Activated T-helper 1 cell treated with anti-CD3 and anti-CD28 coated beads, Interleukin-12 subunit alpha, Interleukin-12 subunit beta, Interleukin-2, Interleukin-4 antibody, amounts not matched to agents 30 ng/mL and 10 ng/mL and 1 ng/mL, durations not matched to agents 14 hours and 24 hours and 36 hours (primary cell): ENCODE measurements at regions of chr19 and their contacts with region 1.

Region 1: GRCh38 chr19:44500148-44500956 is at the start of gene ZNF180:
- DNase-seq: peak; percentile 92
- H3K4me3 Mint-ChIP-seq: peak within 1 kb of the TSS; percentile 93
- H3K27ac Mint-ChIP-seq: peak within 1 kb of the TSS; percentile 86
- H3K4me1 Mint-ChIP-seq: peaks cover 28% of the 10 kb centered on the region
- H3K27me3 Mint-ChIP-seq: no peaks in the 10 kb centered on the region
- total RNA-seq, gene ZNF180: 8.8 and 10.1 TPM in 2 replicates

Region 2: DNA sequence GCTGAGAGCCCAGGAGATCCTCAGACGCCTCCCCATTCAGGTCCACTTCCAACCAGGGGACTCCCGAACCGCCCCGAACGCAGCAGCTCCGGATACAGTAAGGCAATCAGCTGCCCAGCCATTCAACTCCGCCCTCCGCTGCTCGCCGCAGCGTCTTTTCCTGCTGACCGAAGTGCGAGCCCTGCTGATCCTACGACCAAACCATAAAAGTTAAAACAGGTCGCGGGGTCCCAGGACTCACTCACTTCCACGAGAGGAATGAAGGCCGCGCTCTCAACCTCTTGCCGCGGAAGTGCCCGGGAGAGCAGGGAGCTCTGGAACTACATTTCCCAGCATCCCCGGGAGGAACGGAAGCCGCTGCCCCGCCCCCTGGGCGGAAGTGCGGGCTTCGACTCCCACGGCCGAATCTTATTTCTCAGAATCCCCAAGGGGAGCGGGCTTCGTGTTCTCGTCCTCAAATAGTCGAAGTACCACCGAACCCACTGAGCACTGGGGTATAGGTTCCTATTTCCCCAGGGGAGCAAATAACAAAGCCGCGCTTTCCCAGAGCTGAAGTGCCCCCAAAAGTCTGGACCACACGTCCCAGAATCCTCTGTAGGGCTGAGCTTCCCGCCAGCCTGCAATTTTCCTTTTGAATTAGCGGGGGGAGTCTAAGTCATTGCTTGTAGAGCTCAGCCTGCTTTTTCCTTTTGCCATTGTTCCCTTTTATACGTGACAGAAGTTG is 565.2 kb before region 1 on chr19 and contains the start of gene ZNF45:
- intact Hi-C with region 1: loop called (anchors 5 kb)
- DNase-seq: peak; percentile 81
- H3K4me3 Mint-ChIP-seq: peak within 1 kb of the TSS; percentile 95
- H3K27ac Mint-ChIP-seq: peak within 1 kb of the TSS; percentile 83
- H3K4me1 Mint-ChIP-seq: peaks cover 20% of the 10 kb centered on the region
- H3K27me3 Mint-ChIP-seq: no peaks in the 10 kb centered on the region
- total RNA-seq, gene ZNF45: 11.5 and 13.1 TPM in 2 replicates

Region 3: GRCh38 chr19:44025217-44025936 is 475.0 kb before region 1 on chr19 and contains the start of gene ZNF222:
- intact Hi-C with region 1: loop called (anchors 10 kb)
- DNase-seq: peak; percentile 69
- H3K4me3 Mint-ChIP-seq: peak within 1 kb of the TSS; percentile 96
- H3K27ac Mint-ChIP-seq: peak within 1 kb of the TSS; percentile 85
- H3K4me1 Mint-ChIP-seq: peaks cover 18% of the 10 kb centered on the region
- H3K27me3 Mint-ChIP-seq: no peaks in the 10 kb centered on the region
- total RNA-seq, gene ZNF222: 1.2 and 1.5 TPM in 2 replicates

Region 4: GRCh38 chr19:44164673-44165512 is 335.5 kb before region 1 on chr19 and contains the start of gene ZNF226:
- intact Hi-C with region 1: loop called (anchors 1 kb)
- DNase-seq: peak; percentile 71
- H3K4me3 Mint-ChIP-seq: peak within 1 kb of the TSS; percentile 90
- H3K27ac Mint-ChIP-seq: peak within 1 kb of the TSS; percentile 84
- H3K4me1 Mint-ChIP-seq: peaks cover 29% of the 10 kb centered on the region
- H3K27me3 Mint-ChIP-seq: no peaks in the 10 kb centered on the region
- total RNA-seq, gene ZNF226: 10.5 and 11.6 TPM in 2 replicates

Region 5: DNA sequence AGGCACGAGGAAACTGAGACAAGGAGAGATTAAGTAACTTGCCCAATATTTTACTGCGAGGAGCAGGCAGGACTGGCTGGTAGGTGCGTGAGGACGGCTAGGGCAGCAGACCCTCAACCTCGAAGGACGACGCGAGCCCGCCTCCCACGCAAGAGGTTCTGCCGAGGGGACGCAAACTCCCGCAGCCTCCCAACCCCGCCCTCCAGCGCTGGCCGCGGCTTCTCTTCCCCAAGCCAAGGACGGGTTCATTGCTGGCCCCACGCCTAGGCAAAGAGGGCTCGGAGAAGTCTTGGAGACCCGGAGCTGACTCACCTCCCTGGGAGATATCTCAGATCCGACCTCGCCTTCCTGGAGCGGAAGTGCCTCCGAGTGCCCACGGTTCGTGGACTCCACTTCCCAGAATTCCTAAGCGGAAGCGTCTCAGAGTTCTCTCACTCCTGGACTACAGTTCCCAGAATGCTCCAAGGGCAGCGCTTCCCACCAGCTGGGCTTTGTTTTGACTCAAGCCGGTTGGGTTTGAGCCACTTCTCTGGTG is 195.6 kb before region 1 on chr19 and contains the start of gene ZNF235:
- intact Hi-C with region 1: loop called (anchors 1 kb)
- DNase-seq: peak; percentile 60
- H3K4me3 Mint-ChIP-seq: peak within 1 kb of the TSS; percentile 90
- H3K27ac Mint-ChIP-seq: peak within 1 kb of the TSS; percentile 34
- H3K4me1 Mint-ChIP-seq: peaks cover 20% of the 10 kb centered on the region
- H3K27me3 Mint-ChIP-seq: no peaks in the 10 kb centered on the region
- total RNA-seq, gene ZNF235: 3.8 and 4.7 TPM in 2 replicates

Region 6: GRCh38 chr19:44696939-44697669 is 196.8 kb after region 1 on chr19:
- intact Hi-C with region 1: no loop called
- DNase-seq: no peak
- H3K4me3 Mint-ChIP-seq: no peak overlapping the region
- H3K27ac Mint-ChIP-seq: no peak overlapping the region
- H3K4me1 Mint-ChIP-seq: peaks cover 29% of the 10 kb centered on the region
- H3K27me3 Mint-ChIP-seq: peaks cover 10% of the 10 kb centered on the region

Region 7: DNA sequence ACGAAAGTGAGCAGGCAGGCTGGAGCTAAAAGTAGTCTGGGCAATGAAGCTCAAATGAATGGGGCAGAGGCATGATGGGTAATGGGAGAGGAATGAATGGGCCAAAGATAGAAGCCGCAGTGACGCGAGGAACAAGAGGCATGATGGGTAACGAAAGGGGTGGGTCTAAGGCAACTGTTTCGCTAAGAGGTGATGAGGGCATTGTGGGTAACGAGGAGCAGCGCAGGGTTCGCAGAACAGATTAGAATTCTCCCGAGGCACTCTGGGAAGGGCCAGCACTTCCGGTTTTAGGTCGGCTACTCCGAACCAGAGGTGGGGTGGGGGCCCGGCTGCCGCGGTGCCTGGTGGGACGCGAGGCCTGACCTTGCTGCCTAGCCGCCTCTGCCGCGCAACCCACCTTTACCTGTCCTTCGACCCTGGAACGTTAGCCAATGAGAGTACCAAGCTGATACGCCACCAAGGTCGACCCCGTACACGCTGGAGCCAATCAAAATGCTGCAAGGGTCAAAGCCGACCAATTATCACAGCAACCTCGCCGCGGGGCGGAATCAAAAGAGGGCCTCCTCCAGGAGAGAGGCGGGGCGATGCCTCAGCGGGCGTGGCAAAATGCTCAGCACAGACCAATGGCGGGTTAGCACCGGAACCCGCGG is 390.1 kb after region 1 on chr19:
- intact Hi-C with region 1: loop called (anchors 1 kb)
- DNase-seq: peak; percentile 100
- H3K4me3 Mint-ChIP-seq: peak overlapping the region; percentile 86
- H3K27ac Mint-ChIP-seq: peak overlapping the region; percentile 96
- H3K4me1 Mint-ChIP-seq: peaks cover 30% of the 10 kb centered on the region
- H3K27me3 Mint-ChIP-seq: no peaks in the 10 kb centered on the region